Sigmoid colon (tissue), 7 donors: ENCODE measurements at regions of chr5 and their contacts with region 1.

Region 1: DNA sequence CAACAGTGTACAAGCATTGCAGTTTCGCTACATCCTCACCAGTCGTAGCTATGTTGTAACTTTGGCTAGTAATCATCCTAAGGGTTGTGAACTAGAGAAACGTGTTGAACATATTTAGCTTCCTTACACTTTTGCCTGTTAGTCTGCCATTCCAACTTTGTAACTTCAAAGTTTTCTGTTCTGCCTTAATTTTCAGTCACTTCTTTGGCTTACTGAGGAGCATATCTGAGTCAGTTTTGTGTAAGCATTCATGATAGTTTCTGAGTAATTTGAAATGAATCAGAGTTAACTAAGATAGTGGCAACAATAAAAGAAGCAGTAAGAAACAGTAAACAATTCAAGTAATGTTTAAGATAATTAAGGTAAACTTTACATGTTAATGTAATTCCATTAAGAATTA is 58.9 kb upstream of the MCCC2 start:
- DNase-seq: no peak
- H3K4me3 ChIP-seq: no peak overlapping the region
- H3K27ac ChIP-seq: no peak overlapping the region
- H3K4me1 ChIP-seq: no peaks in the 10 kb centered on the region
- H3K27me3 ChIP-seq: no peaks in the 10 kb centered on the region
- CTCF ChIP-seq: no peak
- EP300 ChIP-seq: no peak
- POLR2A ChIP-seq: no peak

Region 2: GRCh38 chr5:71461360-71461759 is 66.8 kb before region 1 on chr5:
- intact Hi-C with region 1: loop called (anchors 10 kb)
- DNase-seq: no peak
- H3K4me3 ChIP-seq: no peak overlapping the region
- H3K27ac ChIP-seq: no peak overlapping the region
- H3K4me1 ChIP-seq: peaks cover 0 to 24% (median 16%) of the 10 kb centered on the region in 4 donors
- H3K27me3 ChIP-seq: no peaks in the 10 kb centered on the region
- CTCF ChIP-seq: no peak
- EP300 ChIP-seq: no peak
- POLR2A ChIP-seq: no peak